ENCODE measurements at regions of chr5 and their contacts with region 1.

Region 1: DNA sequence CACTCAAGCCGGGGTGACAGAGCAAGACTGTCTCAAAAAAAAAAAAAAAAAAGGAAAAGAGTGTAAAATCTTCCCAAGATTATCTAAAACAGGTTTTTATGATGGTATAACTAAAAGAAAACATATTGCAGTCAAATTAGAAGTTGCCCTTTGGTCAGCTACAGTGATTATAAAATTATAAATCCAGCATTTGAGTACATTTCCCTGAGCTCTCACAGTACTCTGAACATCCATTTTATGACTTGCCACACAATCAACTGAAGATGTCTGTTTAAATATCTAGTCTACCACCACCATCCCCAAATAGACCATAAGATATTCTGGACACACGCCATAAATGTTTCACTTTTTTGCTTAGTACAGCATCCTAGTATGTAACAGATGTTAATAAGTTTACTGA is 77.0 kb downstream of the CSF2 start:
- DNase-seq: no peak
- H3K4me3 ChIP-seq: no peak overlapping the region
- H3K27ac ChIP-seq: no peak overlapping the region
- H3K4me1 ChIP-seq: no peaks in the 10 kb centered on the region
- H3K27me3 ChIP-seq: no peaks in the 10 kb centered on the region
- CTCF ChIP-seq: no peak

Region 2: GRCh38 chr5:132086277-132086794 is 64.2 kb before region 1 on chr5:
- CTCF ChIA-PET with region 1: no interaction called
- dilution Hi-C with region 1: loop called (anchors 5 kb)
- in situ Hi-C with region 1: no loop called
- intact Hi-C with region 1: no loop called
- DNase-seq: peak; percentile 94
- H3K4me3 ChIP-seq: no peak overlapping the region
- H3K27ac ChIP-seq: peak overlapping the region; percentile 39
- H3K4me1 ChIP-seq: peaks cover 46% of the 10 kb centered on the region
- H3K27me3 ChIP-seq: no peaks in the 10 kb centered on the region
- CTCF ChIP-seq: no peak

Measured in mammary epithelial cell (primary cell).